ENCODE measurements at regions of chr3 and their contacts with region 1.

Region 1: GRCh38 chr3:87350364-87351199 is 74.2 kb upstream of the POU1F1 start:
- DNase-seq: peak; percentile 45
- ATAC-seq: peak; percentile 93
- H3K4me3 Mint-ChIP-seq: no peak overlapping the region
- H3K27ac Mint-ChIP-seq: no peak overlapping the region
- H3K4me1 Mint-ChIP-seq: no peaks in the 10 kb centered on the region
- H3K27me3 Mint-ChIP-seq: peaks cover 13% of the 10 kb centered on the region

Region 2: DNA sequence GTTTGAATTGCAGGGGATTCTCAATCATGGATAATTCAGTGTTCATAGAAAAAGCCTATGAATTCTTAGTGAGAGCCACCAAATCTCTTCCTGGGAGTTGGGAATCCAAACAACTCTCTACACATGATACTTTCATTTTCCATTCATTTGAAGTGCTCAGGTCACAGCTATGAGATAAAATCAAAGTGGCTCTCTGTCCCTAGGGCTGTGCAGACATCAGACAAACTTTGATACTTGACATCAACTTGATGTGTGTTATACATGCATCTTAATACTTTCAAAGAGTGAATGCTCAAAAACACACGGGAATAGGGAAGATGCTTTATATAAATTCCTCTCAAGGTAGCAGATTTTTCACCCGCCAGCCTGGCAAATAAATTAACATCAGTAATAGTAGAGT is 198.8 kb before region 1 on chr3:
- CTCF ChIA-PET with region 1: no interaction called
- POLR2A ChIA-PET with region 1: no interaction called
- DNase-seq: no peak
- ATAC-seq: no peak
- H3K4me3 Mint-ChIP-seq: no peak overlapping the region
- H3K27ac Mint-ChIP-seq: no peak overlapping the region
- H3K4me1 Mint-ChIP-seq: no peaks in the 10 kb centered on the region
- H3K27me3 Mint-ChIP-seq: no peaks in the 10 kb centered on the region

Region 3: GRCh38 chr3:87361271-87361670 is 10.7 kb after region 1 on chr3:
- CTCF ChIA-PET with region 1: interaction called, 16 read pairs
- POLR2A ChIA-PET with region 1: no interaction called
- DNase-seq: no peak
- ATAC-seq: no peak
- H3K4me3 Mint-ChIP-seq: no peak overlapping the region
- H3K27ac Mint-ChIP-seq: no peak overlapping the region
- H3K4me1 Mint-ChIP-seq: no peaks in the 10 kb centered on the region
- H3K27me3 Mint-ChIP-seq: no peaks in the 10 kb centered on the region